Gastrocnemius medialis (tissue), 4 donors: ENCODE measurements at regions of chr14 and their contacts with region 1.

Region 1: GRCh38 chr14:35416108-35416750 is 11.7 kb upstream of the NFKBIA start:
- DNase-seq: no peak
- ATAC-seq: no peak
- H3K4me3 ChIP-seq: no peak overlapping the region
- H3K27ac ChIP-seq: no peak overlapping the region
- H3K4me1 ChIP-seq: peaks cover 6 to 13% of the 10 kb centered on the region in 2 donors
- H3K27me3 ChIP-seq: no peaks in the 10 kb centered on the region
- CTCF ChIP-seq: no peak
- POLR2A ChIP-seq: no peak

Region 2: GRCh38 chr14:35140718-35141581 is 275.3 kb before region 1 on chr14:
- in situ Hi-C with region 1: loop called in 2 of 4 experiments (anchors 5 kb)
- intact Hi-C with region 1: loop called (anchors 1 kb)
- DNase-seq: no peak
- ATAC-seq: no peak
- H3K4me3 ChIP-seq: no peak overlapping the region
- H3K27ac ChIP-seq: no peak overlapping the region
- H3K4me1 ChIP-seq: no peaks in the 10 kb centered on the region
- H3K27me3 ChIP-seq: no peaks in the 10 kb centered on the region
- CTCF ChIP-seq: peak in 3 of 5 experiments; percentile 33 to 52 (median 50)
- POLR2A ChIP-seq: no peak

Region 3: GRCh38 chr14:35215110-35215876 is 200.9 kb before region 1 on chr14:
- in situ Hi-C with region 1: loop called (anchors 5 to 10 kb)
- intact Hi-C with region 1: loop called (anchors 1 kb)
- DNase-seq: no peak
- ATAC-seq: peak; percentile 52 to 61
- H3K4me3 ChIP-seq: no peak overlapping the region
- H3K27ac ChIP-seq: no peak overlapping the region
- H3K4me1 ChIP-seq: no peaks in the 10 kb centered on the region
- H3K27me3 ChIP-seq: no peaks in the 10 kb centered on the region
- CTCF ChIP-seq: peak in 3 of 5 experiments; percentile 26 to 57 (median 33)
- POLR2A ChIP-seq: no peak

Region 4: DNA sequence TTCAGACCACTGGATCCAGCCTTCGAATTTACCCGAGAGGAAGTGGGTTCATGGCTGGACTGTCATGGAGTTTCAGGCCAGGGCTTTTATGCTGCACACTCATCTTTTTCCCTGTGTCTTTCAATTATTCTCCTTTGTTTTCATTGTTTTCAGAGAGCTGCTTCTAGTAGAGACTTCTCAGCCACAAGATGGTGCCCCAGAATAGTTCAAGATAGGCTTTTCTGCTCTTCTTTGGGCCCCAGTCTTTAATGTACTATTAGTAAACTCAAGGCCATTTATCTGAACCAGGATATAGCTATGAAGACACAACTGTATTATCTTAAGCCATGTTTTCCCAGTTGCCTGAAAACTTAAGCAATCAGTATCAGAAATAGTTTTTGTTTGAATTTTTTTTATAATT is 154.5 kb before region 1 on chr14:
- in situ Hi-C with region 1: no loop called
- intact Hi-C with region 1: loop called (anchors 2 kb)
- DNase-seq: no peak
- ATAC-seq: peak in 1 of 2 donors; percentile 78
- H3K4me3 ChIP-seq: no peak overlapping the region
- H3K27ac ChIP-seq: no peak overlapping the region
- H3K4me1 ChIP-seq: peaks cover 0 to 5% of the 10 kb centered on the region in 2 donors
- H3K27me3 ChIP-seq: no peaks in the 10 kb centered on the region
- CTCF ChIP-seq: peak in 3 of 5 experiments; percentile 14 to 52 (median 43)
- POLR2A ChIP-seq: no peak